PC-3 (cell line): ENCODE measurements at regions of chr4 and their contacts with region 1.

Region 1: DNA sequence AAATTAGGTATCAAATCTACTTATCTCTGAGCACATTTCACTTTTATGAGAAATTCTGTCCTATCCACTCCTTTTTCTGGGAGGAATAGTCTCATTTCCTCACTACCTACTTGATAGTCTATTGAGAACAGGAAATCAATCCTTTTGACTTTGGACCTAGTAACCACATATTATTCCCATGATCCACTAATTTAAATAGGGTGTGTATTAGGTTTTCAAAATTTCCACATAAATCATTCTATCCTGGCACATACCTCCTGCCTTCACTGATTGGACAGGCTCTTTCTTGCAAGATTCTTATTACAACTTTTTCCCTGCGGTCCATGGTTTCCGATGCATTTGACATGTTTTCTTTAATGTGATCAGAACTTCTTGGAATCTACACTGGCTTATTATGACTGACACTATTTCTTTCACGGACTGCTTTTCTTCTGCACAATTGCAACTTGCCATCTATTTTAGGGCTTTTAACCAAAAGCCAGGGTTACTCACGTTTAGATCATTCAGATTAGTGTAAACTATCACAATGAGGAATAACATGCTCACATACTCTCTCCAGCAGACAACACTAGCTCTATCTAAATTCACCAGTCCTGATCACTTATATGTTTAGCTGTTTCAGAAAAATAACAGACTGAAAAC is 419.9 kb upstream of the SLIT2 start:
- DNase-seq: peak; percentile 62
- ATAC-seq: peak; percentile 88
- H3K4me3 ChIP-seq: peak overlapping the region; percentile 19; the same call in 1 of the 2 replicates
- H3K27ac ChIP-seq: peak overlapping the region; percentile 63
- H3K4me1 ChIP-seq: peaks cover 22% of the 10 kb centered on the region
- H3K27me3 ChIP-seq: no peaks in the 10 kb centered on the region
- CTCF ChIP-seq: no peak

Region 2: DNA sequence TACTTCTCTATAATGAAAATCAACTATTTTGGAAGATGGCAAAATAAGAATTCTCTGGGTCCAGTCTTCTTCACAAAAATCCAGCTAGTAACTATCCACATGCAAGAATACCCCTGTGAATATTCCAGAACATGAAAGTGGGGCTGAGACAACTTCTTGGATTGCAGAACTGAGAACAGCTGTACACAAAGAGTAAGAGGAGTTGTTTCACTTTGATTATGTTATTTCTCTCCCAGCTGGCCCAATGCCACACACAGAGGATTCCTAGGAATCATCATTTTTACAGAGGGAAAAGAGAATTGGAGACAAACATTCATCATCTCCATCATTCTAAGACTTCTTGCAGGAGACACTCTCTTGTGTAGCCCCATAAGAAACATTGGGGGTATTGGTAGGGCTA is 1028.0 kb before region 1 on chr4:
- CTCF ChIA-PET with region 1: no interaction called
- POLR2A ChIA-PET with region 1: no interaction called
- intact Hi-C with region 1: no loop called
- DNase-seq: no peak
- ATAC-seq: no peak
- H3K4me3 ChIP-seq: no peak overlapping the region
- H3K27ac ChIP-seq: no peak overlapping the region
- H3K4me1 ChIP-seq: no peaks in the 10 kb centered on the region
- H3K27me3 ChIP-seq: no peaks in the 10 kb centered on the region
- CTCF ChIP-seq: no peak

Region 3: GRCh38 chr4:19205853-19206252 is 625.9 kb before region 1 on chr4:
- CTCF ChIA-PET with region 1: no interaction called
- POLR2A ChIA-PET with region 1: no interaction called
- intact Hi-C with region 1: no loop called
- DNase-seq: no peak
- ATAC-seq: no peak
- H3K4me3 ChIP-seq: no peak overlapping the region
- H3K27ac ChIP-seq: no peak overlapping the region
- H3K4me1 ChIP-seq: no peaks in the 10 kb centered on the region
- H3K27me3 ChIP-seq: no peaks in the 10 kb centered on the region
- CTCF ChIP-seq: no peak

Region 4: DNA sequence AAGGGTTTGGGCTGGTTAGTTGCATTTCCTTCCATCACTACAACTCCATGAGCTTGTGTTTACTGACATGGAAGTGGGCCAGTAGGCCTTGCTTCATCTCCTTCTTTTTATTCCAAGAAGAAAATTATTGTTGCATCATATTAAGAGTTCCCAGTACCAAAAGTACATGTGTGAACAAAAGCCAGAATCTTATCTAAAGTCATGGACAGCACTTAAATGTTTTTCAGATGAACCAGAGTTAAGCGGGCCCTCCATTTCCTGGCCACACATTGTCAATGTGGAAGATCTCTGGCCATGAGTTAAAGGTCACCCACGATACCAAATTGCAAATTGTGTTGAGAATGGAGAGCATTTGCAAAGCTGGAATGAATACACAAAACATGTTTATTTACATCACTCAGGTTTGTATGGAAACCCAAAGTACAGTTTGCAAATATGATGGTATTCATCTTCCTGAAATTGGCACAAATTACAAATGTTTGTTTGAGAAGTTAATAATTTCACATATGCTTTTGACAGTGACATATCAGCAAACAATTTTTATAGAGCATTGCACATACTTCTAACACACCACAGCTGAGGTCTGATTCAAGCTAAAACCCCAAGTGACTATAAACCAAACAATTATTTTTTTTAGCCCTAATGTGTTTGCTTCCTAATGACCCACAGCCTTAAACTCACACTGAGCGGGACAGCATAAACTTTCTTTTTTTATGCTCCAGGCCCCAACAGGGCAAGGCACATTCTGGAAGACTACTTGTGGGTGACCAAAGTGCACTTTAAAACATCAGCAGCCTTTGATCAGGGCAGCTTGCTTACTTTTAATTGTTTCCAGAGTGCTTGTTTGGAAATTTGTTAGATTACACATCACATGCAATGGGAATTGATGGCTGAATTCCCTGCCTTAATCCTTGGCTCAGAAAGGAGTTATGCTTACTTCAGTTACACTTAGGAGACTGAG is 83.0 kb before region 1 on chr4:
- CTCF ChIA-PET with region 1: no interaction called
- POLR2A ChIA-PET with region 1: interaction called, 8 read pairs
- intact Hi-C with region 1: loop called (anchors 10 kb)
- DNase-seq: peak; percentile 79
- ATAC-seq: peak; percentile 95
- H3K4me3 ChIP-seq: no peak overlapping the region
- H3K27ac ChIP-seq: peak overlapping the region; percentile 85
- H3K4me1 ChIP-seq: peaks cover 25% of the 10 kb centered on the region
- H3K27me3 ChIP-seq: no peaks in the 10 kb centered on the region
- CTCF ChIP-seq: no peak

Region 5: GRCh38 chr4:19791422-19792123 is 40.2 kb before region 1 on chr4:
- CTCF ChIA-PET with region 1: no interaction called
- POLR2A ChIA-PET with region 1: no interaction called
- intact Hi-C with region 1: no loop called
- DNase-seq: peak; percentile 52
- ATAC-seq: no peak
- H3K4me3 ChIP-seq: no peak overlapping the region
- H3K27ac ChIP-seq: peak overlapping the region; percentile 20; the same call in 1 of the 2 replicates
- H3K4me1 ChIP-seq: 0 out of 2 replicates have a peak, but pooled peaks cover 8% of the 10 kb centered on the region
- H3K27me3 ChIP-seq: no peaks in the 10 kb centered on the region
- CTCF ChIP-seq: peak; percentile 51

Region 6: GRCh38 chr4:20337261-20337664 is 505.5 kb after region 1 on chr4:
- CTCF ChIA-PET with region 1: no interaction called
- POLR2A ChIA-PET with region 1: no interaction called
- intact Hi-C with region 1: no loop called
- DNase-seq: no peak
- ATAC-seq: no peak
- H3K4me3 ChIP-seq: no peak overlapping the region
- H3K27ac ChIP-seq: no peak overlapping the region
- H3K4me1 ChIP-seq: no peaks in the 10 kb centered on the region
- H3K27me3 ChIP-seq: no peaks in the 10 kb centered on the region
- CTCF ChIP-seq: no peak